Mammary epithelial cell (primary cell): ENCODE measurements at regions of chr10 and their contacts with region 1.

Region 1: DNA sequence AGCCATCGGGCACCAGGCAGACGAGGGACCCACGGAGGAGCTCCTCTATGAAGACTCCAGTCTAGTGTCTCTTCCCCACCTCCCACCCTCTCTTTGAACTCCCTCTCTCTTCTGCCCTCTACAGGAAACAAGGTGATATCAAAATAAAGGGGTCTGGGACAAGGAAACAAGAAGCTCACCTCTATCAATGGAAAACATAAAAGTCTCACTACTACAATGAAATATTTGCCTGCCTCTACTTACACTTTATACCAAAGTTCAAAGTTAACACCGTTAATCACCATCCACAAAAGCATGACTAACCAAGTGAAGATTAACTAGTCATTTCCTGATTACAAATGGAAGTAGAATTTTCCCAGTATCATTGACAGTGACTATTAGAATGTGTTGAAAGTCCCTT is 82.2 kb downstream of the PARD3 start:
- DNase-seq: peak; percentile 77
- H3K4me3 ChIP-seq: no peak overlapping the region
- H3K27ac ChIP-seq: peak overlapping the region; percentile 75
- H3K4me1 ChIP-seq: peaks cover 31% of the 10 kb centered on the region
- H3K27me3 ChIP-seq: no peaks in the 10 kb centered on the region
- CTCF ChIP-seq: no peak

Region 2: DNA sequence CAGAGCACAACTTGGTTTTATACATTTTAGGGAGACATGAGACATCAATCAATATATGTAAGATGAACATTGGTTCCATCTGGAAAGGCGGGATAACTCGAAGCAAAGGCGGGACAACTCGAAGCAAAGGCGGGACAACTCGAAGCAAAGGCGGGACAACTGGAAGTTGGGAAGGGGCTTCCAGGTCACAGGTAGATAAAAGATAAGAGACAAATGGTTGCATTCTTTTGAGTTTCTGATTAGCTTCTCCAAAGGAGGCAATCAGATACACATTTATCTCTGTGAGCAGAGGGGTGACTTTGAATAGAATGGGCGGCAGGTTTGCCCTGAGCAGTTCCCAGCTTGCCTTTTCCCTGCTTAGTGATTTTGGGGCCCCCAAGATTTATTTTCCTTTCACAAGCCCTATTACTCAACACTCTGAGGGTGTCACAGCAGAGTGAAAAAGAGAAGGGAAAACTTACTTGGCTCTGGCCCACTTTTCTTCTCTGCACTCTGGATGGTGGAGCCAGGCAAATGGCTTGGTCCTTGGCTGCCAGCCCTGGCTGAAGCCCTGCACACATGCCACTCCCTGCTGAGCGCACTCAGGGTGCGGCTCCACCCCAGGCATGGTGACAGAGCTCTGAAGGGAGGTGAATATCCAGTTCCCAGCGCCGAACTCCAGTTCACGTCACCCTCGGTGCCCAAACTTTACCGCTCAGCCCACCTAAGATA is 35.5 kb after region 1 on chr10:
- CTCF ChIA-PET with region 1: no interaction called
- dilution Hi-C with region 1: no loop called
- in situ Hi-C with region 1: no loop called
- intact Hi-C with region 1: loop called (anchors 5 kb)
- DNase-seq: peak; percentile 75
- H3K4me3 ChIP-seq: peak overlapping the region in 1 of 3 experiments; percentile 9
- H3K27ac ChIP-seq: peak overlapping the region; percentile 46
- H3K4me1 ChIP-seq: peaks cover 43% of the 10 kb centered on the region
- H3K27me3 ChIP-seq: no peaks in the 10 kb centered on the region
- CTCF ChIP-seq: no peak